Right ventricle myocardium superior (tissue), 1 donor: ENCODE measurements at regions of chr5 and their contacts with region 1.

Region 1: DNA sequence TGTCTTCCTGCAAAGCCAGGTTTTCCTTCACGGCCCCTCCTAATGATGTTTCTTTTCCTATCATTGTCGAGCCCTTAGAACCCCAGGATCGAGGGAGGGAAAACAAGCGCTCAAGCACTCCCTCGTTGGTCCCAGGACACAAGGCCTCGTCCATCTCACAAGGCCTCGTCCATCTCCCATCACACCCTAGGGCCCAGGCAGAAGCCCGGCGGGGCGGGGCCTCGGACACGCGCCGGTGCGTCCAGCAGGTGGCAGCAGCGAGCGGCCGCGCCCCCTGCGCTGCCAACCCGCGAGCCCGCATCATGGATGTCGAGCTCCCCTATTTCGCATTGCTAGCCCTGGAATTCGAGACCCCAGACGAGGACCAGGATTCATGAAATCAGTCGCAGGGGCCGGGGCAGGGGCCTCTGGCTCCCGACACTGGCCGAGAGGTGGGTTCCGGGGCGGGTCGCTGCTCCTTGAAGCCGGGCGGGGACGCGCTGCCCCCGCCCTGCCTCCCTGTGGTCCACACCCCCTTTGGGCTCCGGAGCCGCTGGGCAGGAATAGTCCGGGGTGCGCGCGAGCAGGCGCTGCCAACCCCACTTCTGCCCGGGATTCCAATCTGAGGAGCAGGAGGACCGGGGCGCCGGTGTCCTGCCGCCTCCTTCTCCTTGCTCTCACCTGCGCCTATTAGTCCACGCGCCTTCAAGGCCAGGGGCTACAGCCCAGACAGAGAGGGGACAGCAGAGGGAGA is at the start of gene ABLIM3:
- DNase-seq: peak; percentile 87
- ATAC-seq: peak; percentile 90
- total RNA-seq, gene ABLIM3: 131 TPM

Region 2: GRCh38 chr5:149175346-149176105 is 34.1 kb after region 1 on chr5:
- intact Hi-C with region 1: loop called (anchors 5 kb)
- DNase-seq: peak; percentile 87
- ATAC-seq: peak; percentile 89

Region 3: DNA sequence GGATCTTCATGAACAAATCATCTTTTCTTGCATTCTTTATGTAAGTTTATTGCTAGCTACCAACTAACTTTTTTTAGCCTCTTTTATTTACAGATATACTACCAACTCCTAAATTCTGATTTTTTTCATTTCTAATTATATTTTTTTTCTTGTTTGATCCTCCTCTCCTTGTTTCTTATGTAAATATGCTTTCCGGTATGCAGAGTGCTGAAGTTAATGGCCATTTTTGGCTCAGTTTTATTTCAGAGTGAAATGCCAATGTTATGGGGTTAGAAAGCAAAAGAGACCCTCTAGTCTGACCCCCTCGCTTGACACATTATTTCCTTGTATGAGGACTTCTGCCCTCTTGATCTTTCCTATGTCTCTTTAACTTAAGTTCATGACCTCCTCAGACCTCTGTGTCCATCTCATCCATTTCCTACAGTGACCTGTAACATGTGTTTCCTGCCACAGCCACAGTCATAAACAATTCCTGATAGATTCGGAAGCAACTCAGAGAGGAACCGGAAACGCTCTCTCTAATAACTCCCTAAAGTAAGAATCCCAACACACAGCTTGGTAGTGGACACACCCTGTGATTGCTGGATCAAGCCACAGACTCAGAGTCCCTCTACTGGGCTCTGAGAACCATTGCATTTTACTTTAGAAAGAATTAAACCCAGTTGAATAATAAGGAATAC is 87.4 kb after region 1 on chr5:
- intact Hi-C with region 1: loop called (anchors 2 kb)
- DNase-seq: no peak
- ATAC-seq: peak; percentile 85